ENCODE measurements at regions of chr9 and their contacts with region 1.

Region 1: GRCh38 chr9:18331808-18332209 is 142.1 kb upstream of the ADAMTSL1 start:
- DNase-seq: peak; percentile 64
- ATAC-seq: no peak
- H3K4me3 ChIP-seq: no peak overlapping the region
- H3K27ac ChIP-seq: no peak overlapping the region
- H3K4me1 ChIP-seq: no peaks in the 10 kb centered on the region
- H3K27me3 ChIP-seq: no peaks in the 10 kb centered on the region
- CTCF ChIP-seq: no peak
- POLR2A ChIP-seq: no peak
- RAD21 ChIP-seq: no peak

Region 2: GRCh38 chr9:18143028-18143745 is 188.6 kb before region 1 on chr9:
- CTCF ChIA-PET with region 1: no interaction called
- POLR2A ChIA-PET with region 1: no interaction called
- dilution Hi-C with region 1: no loop called
- in situ Hi-C with region 1: no loop called
- intact Hi-C with region 1: no loop called
- DNase-seq: no peak
- ATAC-seq: no peak
- H3K4me3 ChIP-seq: no peak overlapping the region
- H3K27ac ChIP-seq: no peak overlapping the region
- H3K4me1 ChIP-seq: no peaks in the 10 kb centered on the region
- H3K27me3 ChIP-seq: no peaks in the 10 kb centered on the region
- CTCF ChIP-seq: peak; percentile 9; the same call in 1 of the 2 replicates
- POLR2A ChIP-seq: no peak
- RAD21 ChIP-seq: no peak

Region 3: DNA sequence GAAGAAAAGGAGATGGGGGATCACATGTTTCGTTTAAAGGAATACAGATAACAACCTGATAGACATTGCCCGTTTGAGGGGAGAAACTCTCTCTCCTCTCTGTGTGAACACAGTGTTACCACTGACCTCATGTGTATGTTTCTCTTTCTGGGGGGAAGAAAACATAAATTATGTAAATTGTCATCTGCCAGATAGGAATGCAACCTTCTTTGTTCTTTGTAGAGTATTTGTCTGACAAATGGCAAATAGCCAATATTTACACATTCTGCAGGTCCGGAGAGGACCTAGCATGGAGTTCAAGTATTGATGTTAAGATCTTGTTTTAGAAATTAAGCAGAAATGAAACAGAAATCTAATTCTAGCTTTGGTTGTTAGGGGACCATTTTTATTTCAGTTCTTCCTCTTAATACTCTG is 424.9 kb after region 1 on chr9:
- CTCF ChIA-PET with region 1: no interaction called
- POLR2A ChIA-PET with region 1: no interaction called
- dilution Hi-C with region 1: no loop called
- in situ Hi-C with region 1: no loop called
- intact Hi-C with region 1: loop called (anchors 2 kb)
- DNase-seq: no peak
- ATAC-seq: no peak
- H3K4me3 ChIP-seq: no peak overlapping the region
- H3K27ac ChIP-seq: no peak overlapping the region
- H3K4me1 ChIP-seq: peaks cover 2% of the 10 kb centered on the region; the same call in 1 of the 2 replicates
- H3K27me3 ChIP-seq: no peaks in the 10 kb centered on the region
- CTCF ChIP-seq: no peak
- POLR2A ChIP-seq: no peak
- RAD21 ChIP-seq: no peak

Measured in IMR-90 (cell line).